B cell (primary cell): ENCODE measurements at regions of chr15 and their contacts with region 1.

Region 1: DNA sequence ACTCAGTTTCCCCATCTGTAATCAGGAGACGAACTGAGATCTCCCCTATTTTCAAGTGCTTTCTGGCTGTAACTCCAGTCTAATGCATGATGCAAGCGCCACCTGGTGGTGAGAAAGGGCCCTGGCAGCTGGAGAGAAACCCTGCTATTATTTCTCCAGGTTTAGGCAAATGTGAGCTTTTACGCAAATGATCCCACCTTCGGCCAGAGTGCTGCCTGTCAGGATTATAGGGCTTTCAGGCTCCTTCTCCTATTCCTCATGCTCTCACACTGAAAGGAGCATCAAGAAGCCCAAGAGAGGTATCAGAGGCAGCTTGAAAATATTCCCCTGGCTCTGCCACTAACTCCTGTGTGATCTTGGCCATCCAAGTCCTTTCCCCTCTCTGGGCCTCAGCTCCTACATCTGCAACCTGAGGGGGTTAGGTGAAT is 93.9 kb upstream of the RASGRF1 start:
- DNase-seq: peak; percentile 77
- ATAC-seq: no peak
- H3K4me3 ChIP-seq: no peak overlapping the region
- H3K4me3 Mint-ChIP-seq: no peak overlapping the region
- H3K27ac ChIP-seq: no peak overlapping the region
- H3K27ac Mint-ChIP-seq: no peak overlapping the region
- H3K4me1 ChIP-seq: peaks cover 0 to 3% of the 10 kb centered on the region in 2 donors
- H3K4me1 Mint-ChIP-seq: no peaks in the 10 kb centered on the region
- H3K27me3 ChIP-seq: peaks cover 0 to 5% (median 0%) of the 10 kb centered on the region in 4 experiments
- H3K27me3 Mint-ChIP-seq: peaks cover 12% of the 10 kb centered on the region
- CTCF ChIP-seq: peak; percentile 98

Region 2: DNA sequence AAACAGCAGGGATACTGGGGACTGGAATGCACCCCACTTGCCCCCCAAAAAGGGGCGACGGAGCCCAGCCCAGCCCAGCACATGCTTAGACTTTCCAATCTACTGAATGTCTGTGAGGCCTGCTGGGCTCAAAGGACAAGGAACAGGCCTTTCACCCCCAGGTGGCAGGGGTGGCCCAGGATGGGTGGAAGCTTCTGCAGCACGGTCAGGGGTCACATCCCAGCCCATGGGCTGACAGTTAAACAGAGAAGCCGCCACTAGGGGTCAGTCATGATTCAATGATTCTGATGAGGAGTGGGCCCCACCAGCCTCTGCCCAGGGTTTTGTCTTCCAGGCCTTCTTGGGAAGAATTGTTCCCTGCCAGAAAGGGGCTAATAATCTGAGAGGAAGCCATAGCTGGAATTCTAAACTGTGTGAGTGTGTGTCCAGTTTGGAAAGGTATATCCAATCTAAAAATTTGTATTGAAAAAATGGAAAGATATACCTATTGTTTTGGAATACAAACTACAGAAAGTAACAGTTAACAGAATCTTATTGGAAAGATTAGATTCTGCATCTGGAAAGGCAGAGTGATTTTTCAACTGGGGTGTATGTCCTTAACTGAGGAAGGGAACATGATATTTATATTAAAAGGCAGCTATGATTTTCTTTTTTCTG is 545.7 kb before region 1 on chr15:
- CTCF ChIA-PET with region 1: interaction called, 6 read pairs
- POLR2A ChIA-PET with region 1: no interaction called
- intact Hi-C with region 1: loop called (anchors 5 kb)
- DNase-seq: peak; percentile 52
- ATAC-seq: peak; percentile 51
- H3K4me3 ChIP-seq: no peak overlapping the region
- H3K4me3 Mint-ChIP-seq: no peak overlapping the region
- H3K27ac ChIP-seq: no peak overlapping the region
- H3K27ac Mint-ChIP-seq: no peak overlapping the region
- H3K4me1 ChIP-seq: peaks cover 12% of the 10 kb centered on the region in 2 donors
- H3K4me1 Mint-ChIP-seq: peaks cover 10% of the 10 kb centered on the region
- H3K27me3 ChIP-seq: peaks cover 0 to 21% (median 4%) of the 10 kb centered on the region in 4 experiments
- H3K27me3 Mint-ChIP-seq: peaks cover 10% of the 10 kb centered on the region
- CTCF ChIP-seq: peak; percentile 53

Region 3: DNA sequence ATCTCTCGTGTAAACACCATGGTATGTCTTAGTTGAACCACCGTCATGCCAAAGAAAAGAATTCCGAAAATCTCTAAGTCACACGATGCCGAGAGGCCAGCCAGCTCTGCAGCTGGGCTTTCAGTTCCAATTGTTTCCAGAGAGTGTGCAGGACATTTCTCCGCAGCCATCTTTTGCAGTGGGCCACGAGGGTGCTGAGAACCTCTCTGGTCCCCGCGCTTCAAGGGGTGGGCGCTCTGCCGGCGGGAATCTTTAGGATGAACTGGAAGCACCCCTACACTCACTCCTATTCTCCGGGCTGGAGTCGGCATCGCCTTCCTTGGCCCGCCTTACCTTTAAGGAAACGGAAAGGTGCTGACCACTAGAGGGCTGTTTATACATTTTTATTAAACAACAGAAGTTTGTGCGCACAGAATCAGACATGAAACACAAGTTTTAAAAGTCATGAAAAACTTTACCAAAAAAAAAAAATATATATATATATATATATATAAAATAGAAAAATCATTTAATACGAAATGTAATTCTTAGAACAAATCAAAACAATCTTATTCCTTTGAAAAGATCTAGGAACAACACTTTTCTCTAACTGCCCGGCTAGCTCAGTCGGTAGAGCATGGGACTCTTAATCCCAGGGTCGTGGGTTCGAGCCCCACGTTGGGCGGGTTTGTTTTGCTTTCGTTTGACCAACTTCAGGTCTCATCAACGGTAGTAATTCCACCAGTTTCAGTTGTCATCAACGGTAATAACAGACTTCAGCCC is 324.3 kb before region 1 on chr15:
- CTCF ChIA-PET with region 1: interaction called, 22 read pairs
- POLR2A ChIA-PET with region 1: interaction called, 6 read pairs
- intact Hi-C with region 1: loop called (anchors 1 kb)
- DNase-seq: peak; percentile 82
- ATAC-seq: peak; percentile 81
- H3K4me3 ChIP-seq: peak overlapping the region; percentile 25 to 81 (median 53)
- H3K4me3 Mint-ChIP-seq: peak overlapping the region; percentile 81
- H3K27ac ChIP-seq: no peak overlapping the region
- H3K27ac Mint-ChIP-seq: peak overlapping the region; percentile 92
- H3K4me1 ChIP-seq: peaks cover 3 to 7% of the 10 kb centered on the region in 2 donors
- H3K4me1 Mint-ChIP-seq: peaks cover 7% of the 10 kb centered on the region
- H3K27me3 ChIP-seq: no peaks in the 10 kb centered on the region
- H3K27me3 Mint-ChIP-seq: no peaks in the 10 kb centered on the region
- CTCF ChIP-seq: peak; percentile 77

Region 4: GRCh38 chr15:78881685-78882084 is 302.8 kb before region 1 on chr15:
- CTCF ChIA-PET with region 1: interaction called, 11 read pairs
- POLR2A ChIA-PET with region 1: no interaction called
- intact Hi-C with region 1: no loop called
- DNase-seq: no peak
- ATAC-seq: no peak
- H3K4me3 ChIP-seq: no peak overlapping the region
- H3K4me3 Mint-ChIP-seq: no peak overlapping the region
- H3K27ac ChIP-seq: no peak overlapping the region
- H3K27ac Mint-ChIP-seq: no peak overlapping the region
- H3K4me1 ChIP-seq: peaks cover 25% of the 10 kb centered on the region in 2 donors
- H3K4me1 Mint-ChIP-seq: peaks cover 51% of the 10 kb centered on the region
- H3K27me3 ChIP-seq: no peaks in the 10 kb centered on the region
- H3K27me3 Mint-ChIP-seq: no peaks in the 10 kb centered on the region
- CTCF ChIP-seq: no peak

Region 5: GRCh38 chr15:78909791-78910228 is 274.7 kb before region 1 on chr15:
- CTCF ChIA-PET with region 1: interaction called, 216 read pairs
- POLR2A ChIA-PET with region 1: no interaction called
- intact Hi-C with region 1: loop called (anchors 1 kb)
- DNase-seq: peak; percentile 71
- ATAC-seq: peak; percentile 50
- H3K4me3 ChIP-seq: no peak overlapping the region
- H3K4me3 Mint-ChIP-seq: no peak overlapping the region
- H3K27ac ChIP-seq: no peak overlapping the region
- H3K27ac Mint-ChIP-seq: peak overlapping the region; percentile 18
- H3K4me1 ChIP-seq: no peaks in the 10 kb centered on the region
- H3K4me1 Mint-ChIP-seq: peaks cover 18% of the 10 kb centered on the region
- H3K27me3 ChIP-seq: no peaks in the 10 kb centered on the region
- H3K27me3 Mint-ChIP-seq: no peaks in the 10 kb centered on the region
- CTCF ChIP-seq: peak; percentile 79

Region 6: DNA sequence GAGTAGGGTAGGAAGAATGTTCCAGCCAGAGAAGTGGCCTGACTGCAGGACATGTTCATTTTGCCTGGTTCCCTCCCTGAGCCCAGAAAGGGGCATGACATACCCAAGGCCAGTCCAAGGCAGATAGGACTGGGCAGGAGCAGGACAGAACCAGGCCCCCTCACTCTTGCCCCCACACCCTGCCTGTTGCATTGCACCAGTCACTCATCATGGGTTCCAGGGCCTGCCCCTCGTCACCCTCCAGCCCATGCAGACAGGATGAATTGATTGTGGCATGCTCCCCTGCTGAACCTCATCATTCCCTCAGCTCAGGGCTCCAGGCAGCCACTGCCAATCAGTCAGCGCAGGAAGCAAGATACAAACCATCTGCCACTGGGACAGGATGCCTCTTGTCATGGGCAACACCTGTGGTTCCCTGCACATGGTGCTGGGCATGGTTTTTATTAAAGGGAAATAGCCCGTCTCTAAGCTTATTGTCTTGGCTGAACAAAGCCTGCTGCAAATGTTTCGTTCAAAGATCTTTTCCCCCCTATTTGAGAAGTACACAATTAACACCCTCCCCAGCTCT is 142.8 kb before region 1 on chr15:
- CTCF ChIA-PET with region 1: interaction called, 15 read pairs
- POLR2A ChIA-PET with region 1: interaction called, 5 read pairs
- intact Hi-C with region 1: no loop called
- DNase-seq: no peak
- ATAC-seq: no peak
- H3K4me3 ChIP-seq: no peak overlapping the region
- H3K4me3 Mint-ChIP-seq: no peak overlapping the region
- H3K27ac ChIP-seq: no peak overlapping the region
- H3K27ac Mint-ChIP-seq: no peak overlapping the region
- H3K4me1 ChIP-seq: no peaks in the 10 kb centered on the region
- H3K4me1 Mint-ChIP-seq: no peaks in the 10 kb centered on the region
- H3K27me3 ChIP-seq: peaks cover 0 to 4% (median 0%) of the 10 kb centered on the region in 4 experiments
- H3K27me3 Mint-ChIP-seq: peaks cover 26% of the 10 kb centered on the region
- CTCF ChIP-seq: no peak

Region 7: GRCh38 chr15:79115986-79116665 is 68.4 kb before region 1 on chr15:
- CTCF ChIA-PET with region 1: interaction called, 3 read pairs
- POLR2A ChIA-PET with region 1: interaction called, 14 read pairs
- intact Hi-C with region 1: no loop called
- DNase-seq: no peak
- ATAC-seq: no peak
- H3K4me3 ChIP-seq: no peak overlapping the region
- H3K4me3 Mint-ChIP-seq: no peak overlapping the region
- H3K27ac ChIP-seq: no peak overlapping the region
- H3K27ac Mint-ChIP-seq: no peak overlapping the region
- H3K4me1 ChIP-seq: no peaks in the 10 kb centered on the region
- H3K4me1 Mint-ChIP-seq: no peaks in the 10 kb centered on the region
- H3K27me3 ChIP-seq: peaks cover 0 to 18% (median 11%) of the 10 kb centered on the region in 4 experiments
- H3K27me3 Mint-ChIP-seq: peaks cover 22% of the 10 kb centered on the region
- CTCF ChIP-seq: no peak

Region 8: GRCh38 chr15:79310983-79311900 is 126.8 kb after region 1 on chr15 and contains the start of gene TMED3:
- CTCF ChIA-PET with region 1: no interaction called
- POLR2A ChIA-PET with region 1: no interaction called
- intact Hi-C with region 1: no loop called
- DNase-seq: peak; percentile 89
- ATAC-seq: peak; percentile 91
- H3K4me3 ChIP-seq: peak within 1 kb of the TSS; percentile 65 to 93 (median 85)
- H3K4me3 Mint-ChIP-seq: peak within 1 kb of the TSS; percentile 92
- H3K27ac ChIP-seq: peak within 1 kb of the TSS; percentile 6 to 64
- H3K27ac Mint-ChIP-seq: peak within 1 kb of the TSS; percentile 82
- H3K4me1 ChIP-seq: peaks cover 14 to 22% of the 10 kb centered on the region in 2 donors
- H3K4me1 Mint-ChIP-seq: peaks cover 27% of the 10 kb centered on the region
- H3K27me3 ChIP-seq: peaks cover 0 to 6% (median 0%) of the 10 kb centered on the region in 4 experiments
- H3K27me3 Mint-ChIP-seq: peaks cover 7% of the 10 kb centered on the region
- CTCF ChIP-seq: peak; percentile 34
- total RNA-seq, gene TMED3: 20.7 and 22.3 TPM in 2 replicates

Region 9: GRCh38 chr15:79427781-79428598 is 243.5 kb after region 1 on chr15:
- CTCF ChIA-PET with region 1: no interaction called
- POLR2A ChIA-PET with region 1: no interaction called
- intact Hi-C with region 1: no loop called
- DNase-seq: no peak
- ATAC-seq: no peak
- H3K4me3 ChIP-seq: no peak overlapping the region
- H3K4me3 Mint-ChIP-seq: no peak overlapping the region
- H3K27ac ChIP-seq: no peak overlapping the region
- H3K27ac Mint-ChIP-seq: no peak overlapping the region
- H3K4me1 ChIP-seq: peaks cover 12 to 14% of the 10 kb centered on the region in 2 donors
- H3K4me1 Mint-ChIP-seq: peaks cover 11% of the 10 kb centered on the region
- H3K27me3 ChIP-seq: peaks cover 0 to 31% (median 17%) of the 10 kb centered on the region in 4 experiments
- H3K27me3 Mint-ChIP-seq: peaks cover 44% of the 10 kb centered on the region
- CTCF ChIP-seq: no peak